PC-3 (cell line): ENCODE measurements at regions of chr19 and their contacts with region 1.

Region 1: GRCh38 chr19:45643024-45643926 is 4.1 kb upstream of the EML2 start:
- DNase-seq: peak; percentile 73
- ATAC-seq: peak; percentile 44
- H3K4me3 ChIP-seq: peak overlapping the region; percentile 72
- H3K27ac ChIP-seq: peak overlapping the region; percentile 43
- H3K4me1 ChIP-seq: peaks cover 25% of the 10 kb centered on the region
- H3K27me3 ChIP-seq: no peaks in the 10 kb centered on the region
- CTCF ChIP-seq: peak; percentile 93

Region 2: GRCh38 chr19:45478454-45479238 is 164.6 kb before region 1 on chr19:
- CTCF ChIA-PET with region 1: no interaction called
- POLR2A ChIA-PET with region 1: no interaction called
- intact Hi-C with region 1: no loop called
- DNase-seq: peak; percentile 90
- ATAC-seq: peak; percentile 88
- H3K4me3 ChIP-seq: peak overlapping the region; percentile 68
- H3K27ac ChIP-seq: peak overlapping the region; percentile 93
- H3K4me1 ChIP-seq: no peaks in the 10 kb centered on the region
- H3K27me3 ChIP-seq: no peaks in the 10 kb centered on the region
- CTCF ChIP-seq: peak; percentile 84

Region 3: DNA sequence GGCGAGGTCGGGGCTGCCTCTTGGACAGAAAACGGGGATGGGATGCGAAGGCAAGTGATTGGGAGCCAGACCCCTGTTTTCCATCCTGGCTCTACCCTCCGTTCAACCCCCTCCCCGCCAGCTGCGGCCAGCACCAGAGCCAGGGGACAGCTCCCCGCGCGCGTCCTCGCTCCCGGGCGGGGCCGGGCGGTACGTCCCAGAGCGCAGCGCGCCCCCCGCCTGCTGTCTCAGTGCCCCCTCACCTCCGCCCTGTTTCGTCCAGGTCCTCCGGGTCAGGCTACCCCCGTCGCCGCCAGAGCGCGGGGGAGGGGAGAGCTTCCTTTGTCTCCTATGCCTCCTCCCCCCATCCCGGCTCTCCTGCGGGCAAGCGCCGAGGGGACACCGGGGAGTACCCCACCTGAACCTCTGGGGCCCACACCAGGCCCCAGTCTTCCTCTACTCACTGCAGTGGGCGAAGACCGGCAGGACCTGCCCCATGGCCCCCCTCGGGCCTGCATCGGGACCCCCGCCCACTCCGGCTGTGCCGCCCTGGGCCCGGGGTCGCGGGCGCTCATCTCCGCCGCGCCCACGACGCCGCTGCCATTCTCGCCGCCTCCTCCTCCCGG is 146.8 kb before region 1 on chr19:
- CTCF ChIA-PET with region 1: no interaction called
- POLR2A ChIA-PET with region 1: no interaction called
- intact Hi-C with region 1: loop called (anchors 10 kb)
- DNase-seq: peak; percentile 18
- ATAC-seq: peak; percentile 8; the same call in 1 of the 2 replicates
- H3K4me3 ChIP-seq: peak overlapping the region; percentile 75
- H3K27ac ChIP-seq: no peak overlapping the region
- H3K4me1 ChIP-seq: peaks cover 7% of the 10 kb centered on the region; the same call in 1 of the 2 replicates
- H3K27me3 ChIP-seq: no peaks in the 10 kb centered on the region
- CTCF ChIP-seq: no peak

Region 4: DNA sequence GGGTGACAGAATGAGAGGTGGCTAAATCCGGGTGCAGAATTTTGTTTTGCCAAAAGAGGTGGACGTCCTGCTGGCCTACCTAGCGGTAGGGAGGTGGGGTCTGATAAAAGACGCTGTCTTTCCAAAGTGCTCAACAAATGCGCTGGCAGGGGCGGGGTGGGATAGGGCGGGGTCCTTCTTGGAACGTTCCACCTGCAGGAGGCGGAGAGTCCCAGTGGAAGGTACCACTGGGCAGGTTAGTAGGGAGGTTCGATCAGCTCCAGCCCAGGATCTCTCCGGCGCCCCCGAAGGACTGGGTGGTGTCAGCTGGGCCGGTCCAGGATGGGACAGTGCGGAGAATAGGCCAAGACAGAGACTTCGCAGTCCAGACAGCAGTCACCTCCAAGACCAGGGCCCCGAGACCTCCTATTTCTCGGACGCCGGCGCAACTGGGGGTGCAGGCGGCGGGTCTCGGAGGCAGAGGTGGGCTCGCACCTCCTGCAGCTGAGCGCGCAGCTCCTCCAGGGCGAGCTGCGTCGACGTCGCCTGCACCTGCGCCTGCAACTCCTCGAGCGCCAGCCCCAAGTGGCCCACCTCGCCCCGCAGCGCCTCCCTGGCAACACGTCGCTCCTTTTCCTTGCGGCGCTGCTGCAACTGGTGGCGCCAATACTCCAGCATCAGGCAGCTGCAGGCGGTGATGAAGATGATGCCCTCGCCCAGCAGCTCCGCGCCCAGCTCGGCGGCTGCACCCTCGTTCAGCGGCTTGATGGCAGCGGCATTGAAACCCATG is 114.4 kb before region 1 on chr19:
- CTCF ChIA-PET with region 1: no interaction called
- POLR2A ChIA-PET with region 1: no interaction called
- intact Hi-C with region 1: loop called (anchors 2 kb)
- DNase-seq: peak; percentile 86
- ATAC-seq: peak; percentile 67
- H3K4me3 ChIP-seq: peak overlapping the region; percentile 75
- H3K27ac ChIP-seq: peak overlapping the region; percentile 86
- H3K4me1 ChIP-seq: peaks cover 16% of the 10 kb centered on the region
- H3K27me3 ChIP-seq: no peaks in the 10 kb centered on the region
- CTCF ChIP-seq: peak; percentile 52

Region 5: GRCh38 chr19:45584332-45585157 is 58.7 kb before region 1 on chr19 and contains the start of gene OPA3:
- CTCF ChIA-PET with region 1: no interaction called
- POLR2A ChIA-PET with region 1: no interaction called
- intact Hi-C with region 1: loop called (anchors 10 kb)
- DNase-seq: peak; percentile 99
- ATAC-seq: peak; percentile 93
- H3K4me3 ChIP-seq: peak within 1 kb of the TSS; percentile 95
- H3K27ac ChIP-seq: peak within 1 kb of the TSS; percentile 97
- H3K4me1 ChIP-seq: peaks cover 11% of the 10 kb centered on the region; the same call in 1 of the 2 replicates
- H3K27me3 ChIP-seq: no peaks in the 10 kb centered on the region
- CTCF ChIP-seq: no peak
- total RNA-seq, gene OPA3: 9.4 and 10.1 TPM in 2 replicates

Region 6: GRCh38 chr19:45607071-45608029 is 35.9 kb before region 1 on chr19:
- CTCF ChIA-PET with region 1: interaction called, 8 read pairs
- POLR2A ChIA-PET with region 1: interaction called, 3 read pairs
- intact Hi-C with region 1: loop called (anchors 1 kb)
- DNase-seq: peak; percentile 76
- ATAC-seq: peak; percentile 78
- H3K4me3 ChIP-seq: peak overlapping the region; percentile 57; the same call in 1 of the 2 replicates
- H3K27ac ChIP-seq: 0 out of 2 replicates have a peak overlapping the region, but pooled peaks have one; percentile 11
- H3K4me1 ChIP-seq: peaks cover 10% of the 10 kb centered on the region
- H3K27me3 ChIP-seq: no peaks in the 10 kb centered on the region
- CTCF ChIP-seq: peak; percentile 79

Region 7: GRCh38 chr19:45677351-45678230 is 34.3 kb after region 1 on chr19:
- CTCF ChIA-PET with region 1: interaction called, 12 read pairs
- POLR2A ChIA-PET with region 1: interaction called, 4 read pairs
- intact Hi-C with region 1: no loop called
- DNase-seq: peak; percentile 92
- ATAC-seq: peak; percentile 78
- H3K4me3 ChIP-seq: peak overlapping the region; percentile 68
- H3K27ac ChIP-seq: no peak overlapping the region
- H3K4me1 ChIP-seq: peaks cover 7% of the 10 kb centered on the region; the same call in 1 of the 2 replicates
- H3K27me3 ChIP-seq: no peaks in the 10 kb centered on the region
- CTCF ChIP-seq: no peak

Region 8: DNA sequence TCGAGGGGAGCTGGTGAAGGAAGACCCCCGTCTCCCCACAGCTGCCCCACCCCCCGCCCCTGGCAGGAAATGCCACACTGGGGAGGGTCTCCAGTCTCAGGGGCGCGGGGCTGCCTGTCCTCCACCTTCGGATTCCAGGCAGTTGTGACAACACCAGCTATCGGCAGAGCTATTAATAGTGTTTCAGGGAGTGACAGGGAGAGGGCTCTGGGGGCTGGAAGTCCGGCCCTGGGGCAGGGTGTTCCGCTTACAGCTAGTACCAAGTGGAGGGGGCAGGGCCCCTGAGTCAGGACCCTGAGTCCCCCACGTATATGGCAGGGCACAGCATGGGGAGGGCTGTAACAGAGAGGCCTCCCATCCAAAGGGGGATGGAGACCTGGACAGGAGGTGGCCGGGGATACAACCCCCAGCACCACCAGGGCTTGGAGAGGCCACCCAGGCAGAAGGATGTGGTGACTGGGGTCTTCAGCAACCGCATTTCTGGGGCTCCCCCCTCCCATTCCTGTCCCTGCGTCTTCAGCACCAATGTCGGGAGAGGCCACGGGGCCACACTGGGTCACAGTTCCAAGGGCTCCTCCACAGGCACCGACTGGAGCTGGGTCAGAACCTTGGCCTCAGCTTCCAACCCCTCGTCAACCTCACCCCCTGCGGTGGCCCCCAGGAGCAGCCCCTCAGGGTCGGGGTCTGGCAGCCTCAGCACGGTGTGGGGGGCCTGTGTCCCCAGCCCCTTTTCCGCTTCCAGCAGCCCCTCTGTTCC is 121.8 kb after region 1 on chr19:
- CTCF ChIA-PET with region 1: no interaction called
- POLR2A ChIA-PET with region 1: no interaction called
- intact Hi-C with region 1: no loop called
- DNase-seq: no peak
- ATAC-seq: no peak
- H3K4me3 ChIP-seq: no peak overlapping the region
- H3K27ac ChIP-seq: no peak overlapping the region
- H3K4me1 ChIP-seq: peaks cover 13% of the 10 kb centered on the region; the same call in 1 of the 2 replicates
- H3K27me3 ChIP-seq: no peaks in the 10 kb centered on the region
- CTCF ChIP-seq: no peak